ENCODE measurements at regions of chr1 and their contacts with region 1.

Region 1: GRCh38 chr1:231590453-231591198 is 36.0 kb upstream of the DISC1 start:
- DNase-seq: peak; percentile 19 to 82 (median 64)

Region 2: GRCh38 chr1:231357831-231358354 is 232.7 kb before region 1 on chr1:
- intact Hi-C with region 1: loop called (anchors 5 kb)
- DNase-seq: peak in 26 of 42 donors; percentile 20 to 75 (median 46)